Cardiac septum (tissue), 1 donor: ENCODE measurements at regions of chr17 and their contacts with region 1.

Region 1: GRCh38 chr17:60435244-60436167 is 13.2 kb downstream of the CHCT1 start:
- DNase-seq: no peak

Region 2: GRCh38 chr17:60141111-60142018 is 294.1 kb before region 1 on chr17:
- intact Hi-C with region 1: loop called (anchors 1 kb)
- DNase-seq: no peak

Region 3: GRCh38 chr17:60231234-60231633 is 204.3 kb before region 1 on chr17:
- intact Hi-C with region 1: loop called (anchors 5 kb)
- DNase-seq: no peak

Region 4: GRCh38 chr17:60354223-60354622 is 81.3 kb before region 1 on chr17:
- intact Hi-C with region 1: no loop called
- DNase-seq: no peak

Region 5: DNA sequence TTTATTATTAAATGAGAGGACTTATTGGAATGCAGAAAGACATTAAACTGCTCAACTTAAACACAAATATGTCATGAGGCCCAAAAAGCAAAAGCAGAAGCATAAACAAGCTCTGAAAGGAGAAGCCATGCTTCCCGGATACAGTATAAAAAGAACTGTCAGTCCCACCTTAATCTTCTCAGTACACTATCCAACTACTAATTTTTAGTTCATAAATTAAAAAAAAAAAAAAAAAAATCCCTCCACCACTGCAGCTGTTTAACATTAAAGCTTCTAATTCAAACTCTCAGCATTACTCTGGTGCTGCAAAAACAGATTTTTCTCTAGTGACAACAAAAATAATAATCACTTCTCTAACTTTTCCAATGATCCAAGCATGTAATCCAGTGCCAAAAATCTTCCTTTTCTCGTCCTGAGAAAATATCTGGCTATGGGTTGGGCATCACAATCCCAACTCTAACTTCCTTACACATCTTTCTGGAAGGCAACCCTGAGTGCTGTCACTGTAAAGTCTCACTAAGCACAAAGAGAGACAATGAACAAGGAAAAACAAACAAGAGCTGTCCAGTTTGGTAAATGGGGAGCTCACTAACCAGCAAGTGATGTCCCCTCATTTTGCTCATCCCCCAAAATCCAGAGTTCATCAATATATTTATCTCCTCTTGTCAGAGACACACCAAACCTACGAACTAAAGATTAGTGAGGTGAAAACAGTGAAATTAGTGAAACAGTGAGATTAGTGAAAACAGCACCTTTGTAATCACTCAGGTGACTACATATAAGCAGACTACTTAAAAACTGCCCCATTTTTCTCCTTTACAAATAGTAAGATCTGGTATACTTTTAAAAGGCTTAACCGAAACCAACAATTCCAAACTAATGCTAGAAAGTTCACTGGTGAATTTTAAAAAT is 49.1 kb before region 1 on chr17:
- intact Hi-C with region 1: loop called (anchors 5 kb)
- DNase-seq: no peak

Region 6: GRCh38 chr17:60493791-60494712 is 58.5 kb after region 1 on chr17:
- intact Hi-C with region 1: no loop called
- DNase-seq: no peak